CD4-positive, alpha-beta memory T cell (primary cell): ENCODE measurements at regions of chr13 and their contacts with region 1.

Region 1: DNA sequence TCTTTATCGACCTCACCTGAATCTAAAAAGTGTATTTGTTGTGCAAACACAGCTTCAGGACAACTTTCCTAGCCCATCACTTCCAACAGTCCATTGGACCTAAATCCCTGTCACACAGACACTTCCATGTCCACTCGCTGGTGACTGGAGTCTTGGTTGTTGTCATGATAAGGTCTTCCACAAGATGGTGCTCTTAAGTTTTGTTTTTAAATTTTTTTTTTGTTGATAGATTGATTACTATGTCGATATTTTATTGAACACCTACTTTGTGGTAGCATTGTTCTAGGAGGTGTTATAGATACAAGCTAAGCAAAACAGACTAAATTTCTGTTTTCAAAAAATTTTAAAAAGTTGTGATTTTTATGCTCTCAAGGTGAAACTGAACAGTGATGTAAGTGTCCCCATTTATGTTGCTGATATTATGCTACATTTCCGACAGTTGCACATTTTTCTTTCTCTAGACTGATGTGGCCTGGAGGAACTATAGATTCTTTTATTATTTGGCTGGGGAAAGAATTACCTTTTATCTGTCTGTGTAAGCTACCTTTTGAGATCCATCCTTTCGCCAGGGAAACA is 8.1 kb upstream of the ERICH6B start:
- DNase-seq: peak in 4 of 5 donors; percentile 11 to 31 (median 22)
- H3K4me3 ChIP-seq: no peak overlapping the region
- H3K4me3 Mint-ChIP-seq: no peak overlapping the region
- H3K27ac ChIP-seq: no peak overlapping the region
- H3K27ac Mint-ChIP-seq: no peak overlapping the region
- H3K4me1 ChIP-seq: peaks cover 5% of the 10 kb centered on the region
- H3K4me1 Mint-ChIP-seq: peaks cover 0 to 1% (median under 1%) of the 10 kb centered on the region in 4 donors
- H3K27me3 ChIP-seq: peaks cover 6% of the 10 kb centered on the region
- H3K27me3 Mint-ChIP-seq: peaks cover 24 to 39% of the 10 kb centered on the region in 2 donors

Region 2: GRCh38 chr13:45683701-45684100 is 60.1 kb after region 1 on chr13:
- CTCF ChIA-PET with region 1: interaction called, 42 read pairs
- POLR2A ChIA-PET with region 1: interaction called, 6 read pairs
- intact Hi-C with region 1: loop called (anchors 1 kb)
- DNase-seq: peak in 1 of 5 donors; percentile 2
- H3K4me3 ChIP-seq: no peak overlapping the region
- H3K4me3 Mint-ChIP-seq: peak overlapping the region in 1 of 8 donors; percentile 25
- H3K27ac ChIP-seq: no peak overlapping the region
- H3K27ac Mint-ChIP-seq: no peak overlapping the region
- H3K4me1 ChIP-seq: no peaks in the 10 kb centered on the region
- H3K4me1 Mint-ChIP-seq: peaks cover 0 to 6% (median 2%) of the 10 kb centered on the region in 4 donors
- H3K27me3 ChIP-seq: no peaks in the 10 kb centered on the region
- H3K27me3 Mint-ChIP-seq: no peaks in the 10 kb centered on the region

Region 3: DNA sequence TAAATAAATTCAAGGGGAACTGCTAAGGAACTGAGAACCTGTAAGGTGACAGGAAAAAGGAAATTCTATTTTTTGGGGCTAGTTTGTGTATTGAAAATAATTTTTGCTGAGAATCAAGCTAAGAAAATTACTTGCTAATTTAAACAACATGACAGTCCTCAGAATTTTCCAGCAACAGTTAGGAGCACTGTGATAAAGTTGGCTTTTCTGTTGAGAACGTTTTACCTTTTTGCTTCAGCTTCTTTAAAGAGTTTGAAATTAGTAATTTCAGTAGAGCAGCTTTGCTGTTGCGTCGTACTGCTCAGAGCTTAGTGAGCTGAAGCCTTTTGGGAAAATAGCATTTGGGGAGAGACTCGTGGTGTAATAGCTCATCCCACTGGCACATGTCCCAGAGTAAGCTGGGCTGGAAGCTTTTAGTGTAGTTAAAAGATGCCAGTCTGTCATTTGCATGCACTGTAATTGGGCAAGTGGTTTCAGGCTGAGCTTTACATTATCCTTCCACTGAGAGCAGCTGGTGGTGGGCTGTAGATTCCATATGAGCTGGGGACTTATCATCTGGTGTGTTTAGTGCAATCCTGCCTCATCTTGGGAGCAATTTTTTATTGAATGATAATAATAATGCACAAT is 999.1 kb after region 1 on chr13:
- CTCF ChIA-PET with region 1: no interaction called
- POLR2A ChIA-PET with region 1: no interaction called
- intact Hi-C with region 1: no loop called
- DNase-seq: no peak
- H3K4me3 ChIP-seq: no peak overlapping the region
- H3K4me3 Mint-ChIP-seq: no peak overlapping the region
- H3K27ac ChIP-seq: no peak overlapping the region
- H3K27ac Mint-ChIP-seq: no peak overlapping the region
- H3K4me1 ChIP-seq: peaks cover 17% of the 10 kb centered on the region
- H3K4me1 Mint-ChIP-seq: peaks cover 44 to 87% (median 60%) of the 10 kb centered on the region in 4 donors
- H3K27me3 ChIP-seq: no peaks in the 10 kb centered on the region
- H3K27me3 Mint-ChIP-seq: no peaks in the 10 kb centered on the region